Posterior cingulate gyrus (tissue), 11 donors: ENCODE measurements at regions of chr16 and their contacts with region 1.

Region 1: DNA sequence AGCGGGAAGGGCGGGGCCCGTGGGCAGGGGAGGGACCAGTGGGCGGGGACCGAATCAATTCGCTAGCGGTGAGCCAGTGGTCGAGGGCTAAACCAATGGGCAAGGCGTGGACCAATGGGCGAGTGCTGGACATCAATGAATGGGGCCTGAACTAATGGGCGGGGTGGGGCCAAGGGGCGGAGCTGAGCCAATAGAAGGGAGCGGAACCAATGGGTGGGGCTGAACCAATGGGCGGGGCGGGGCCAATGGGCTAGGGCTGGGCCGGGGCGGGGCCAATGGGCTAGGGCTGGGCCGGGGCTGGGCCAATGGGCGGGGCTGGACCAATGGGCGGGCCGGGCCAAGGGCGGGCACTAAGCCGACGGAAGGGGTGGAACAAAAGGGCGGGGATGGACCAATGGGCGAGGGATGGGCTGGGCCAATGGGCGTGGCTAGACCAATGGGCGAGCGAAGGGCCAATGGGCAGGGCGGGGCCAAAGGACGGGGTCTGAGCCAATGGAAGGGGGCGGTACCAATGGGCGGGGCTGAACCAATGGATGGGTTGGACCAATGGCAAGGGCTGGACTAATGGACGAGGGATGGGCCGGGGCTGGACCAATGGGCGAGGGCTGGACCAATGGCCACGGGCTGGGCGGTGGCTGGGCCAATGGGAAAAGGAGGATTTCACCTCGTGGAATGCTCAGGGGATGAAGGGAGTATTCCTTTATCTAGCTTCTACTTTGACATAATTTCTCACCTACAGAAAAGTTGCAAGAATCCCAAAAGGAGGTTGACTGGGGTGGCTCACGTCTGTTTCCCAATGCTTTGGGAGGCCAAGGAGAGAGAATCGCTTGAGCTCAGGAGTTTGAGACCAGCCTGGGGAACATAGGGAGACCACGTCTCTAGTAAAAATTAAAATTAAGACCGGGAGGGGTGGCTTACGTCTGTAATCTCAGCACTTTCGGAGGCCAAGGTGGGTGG is 6.0 kb upstream of the FLYWCH1 start:
- DNase-seq: peak; percentile 99 to 100 (median 100)

Region 2: GRCh38 chr16:2817340-2818007 is 88.2 kb before region 1 on chr16:
- intact Hi-C with region 1: no loop called
- DNase-seq: peak in 2 of 10 donors; percentile 74 to 82

Region 3: DNA sequence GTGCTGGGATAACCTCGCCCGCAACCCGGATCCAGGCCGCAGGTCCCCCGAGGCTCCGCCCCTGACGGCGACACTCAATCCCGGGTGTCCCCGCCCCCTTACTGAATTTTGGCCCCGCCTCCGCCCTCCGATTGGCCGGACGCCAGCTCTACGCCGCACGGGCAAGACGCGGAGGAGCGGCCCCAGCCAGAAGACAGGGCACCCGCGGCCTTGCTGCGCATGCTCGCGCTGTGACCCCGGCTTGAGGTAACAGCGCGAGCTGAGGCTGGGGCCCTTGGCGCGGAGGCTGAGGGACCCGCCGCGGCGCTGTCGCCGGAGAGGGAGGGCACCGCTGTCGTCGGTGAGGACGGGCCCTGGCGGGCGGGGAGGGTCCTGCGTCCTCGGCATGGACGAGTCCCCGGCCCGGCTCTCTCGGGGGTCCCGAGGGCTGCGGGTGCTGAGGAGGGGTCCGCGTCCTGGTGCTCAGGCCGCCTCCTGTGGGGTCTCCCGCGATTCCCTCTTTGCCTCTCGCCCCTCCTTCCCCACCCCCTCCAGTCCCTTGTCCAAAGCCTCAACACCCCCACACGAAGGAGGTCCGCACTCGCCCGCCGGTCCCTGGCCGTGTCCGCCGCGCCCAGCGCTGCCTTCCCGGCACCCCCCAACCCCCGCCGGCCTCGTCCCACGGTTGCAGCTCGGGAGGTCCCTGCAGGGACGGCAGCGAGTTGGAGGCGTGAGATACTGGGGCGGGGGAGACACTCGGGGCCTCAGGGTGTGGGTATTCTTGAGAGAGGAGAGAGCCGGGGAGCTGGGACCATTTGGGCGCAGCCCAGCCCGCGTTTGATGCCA is 22.5 kb before region 1 on chr16 and contains the start of gene FLYWCH2:
- intact Hi-C with region 1: loop called (anchors 2 kb)
- DNase-seq: peak; percentile 97 to 100 (median 99)